A549 (cell line): ENCODE measurements at regions of chr1 and their contacts with region 1.

Region 1: DNA sequence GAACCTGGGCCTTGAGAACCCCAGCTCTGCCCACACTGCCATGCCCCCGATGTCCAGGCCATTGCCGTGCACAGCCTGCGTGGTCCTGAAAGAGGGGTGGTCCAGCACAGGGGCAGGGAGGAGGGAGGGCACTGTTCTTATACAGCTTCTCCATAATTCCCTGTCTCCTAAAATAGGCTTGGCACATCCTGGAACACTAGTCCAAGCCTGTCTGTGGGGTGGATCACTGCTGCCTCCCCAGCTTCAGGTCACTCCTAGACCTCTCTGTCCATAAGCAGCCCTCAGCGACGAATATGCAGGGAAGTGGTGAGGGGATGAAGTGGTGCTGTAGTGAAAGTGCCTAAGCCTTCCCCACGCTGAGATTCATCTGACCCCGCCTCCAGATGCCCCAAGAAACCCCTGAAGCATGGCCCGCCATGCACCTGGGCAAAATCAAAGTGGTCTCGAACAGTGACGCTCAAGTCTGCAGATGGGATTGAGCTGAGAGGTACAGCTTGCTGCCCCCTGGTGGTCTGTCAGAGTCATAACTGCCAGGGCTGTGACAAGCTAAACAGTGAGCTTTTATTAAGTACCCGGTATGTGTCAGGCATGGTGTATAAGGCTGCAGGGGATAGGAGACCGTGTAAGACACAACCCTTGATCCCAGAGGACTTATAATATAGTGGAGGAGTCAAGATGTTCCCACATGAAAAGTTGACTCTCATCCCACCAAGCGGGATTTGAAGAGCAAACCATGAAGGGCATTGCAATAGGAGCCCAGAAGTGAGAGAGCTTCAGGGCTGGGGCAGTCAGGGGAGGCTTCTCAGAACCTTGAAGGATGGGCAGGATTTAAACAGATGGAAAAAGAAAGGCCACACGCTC is 66.6 kb downstream of the FAM163A start:
- DNase-seq: peak; percentile 69 to 76
- ATAC-seq: peak; percentile 70 to 80
- H3K4me3 ChIP-seq: no peak overlapping the region
- H3K27ac ChIP-seq: no peak overlapping the region
- H3K4me1 ChIP-seq: no peaks in the 10 kb centered on the region
- CTCF ChIP-seq: peak; percentile 83
- EP300 ChIP-seq: no peak
- POLR2A ChIP-seq: no peak
- RAD21 ChIP-seq: peak; percentile 64 to 66

Region 2: GRCh38 chr1:179728271-179728670 is 81.5 kb before region 1 on chr1:
- CTCF ChIA-PET with region 1: interaction called, 120 read pairs
- POLR2A ChIA-PET with region 1: no interaction called
- DNase-seq: no peak
- ATAC-seq: no peak
- H3K4me3 ChIP-seq: no peak overlapping the region
- H3K27ac ChIP-seq: no peak overlapping the region
- H3K4me1 ChIP-seq: no peaks in the 10 kb centered on the region
- CTCF ChIP-seq: no peak
- EP300 ChIP-seq: no peak
- POLR2A ChIP-seq: no peak
- RAD21 ChIP-seq: no peak

Region 3: DNA sequence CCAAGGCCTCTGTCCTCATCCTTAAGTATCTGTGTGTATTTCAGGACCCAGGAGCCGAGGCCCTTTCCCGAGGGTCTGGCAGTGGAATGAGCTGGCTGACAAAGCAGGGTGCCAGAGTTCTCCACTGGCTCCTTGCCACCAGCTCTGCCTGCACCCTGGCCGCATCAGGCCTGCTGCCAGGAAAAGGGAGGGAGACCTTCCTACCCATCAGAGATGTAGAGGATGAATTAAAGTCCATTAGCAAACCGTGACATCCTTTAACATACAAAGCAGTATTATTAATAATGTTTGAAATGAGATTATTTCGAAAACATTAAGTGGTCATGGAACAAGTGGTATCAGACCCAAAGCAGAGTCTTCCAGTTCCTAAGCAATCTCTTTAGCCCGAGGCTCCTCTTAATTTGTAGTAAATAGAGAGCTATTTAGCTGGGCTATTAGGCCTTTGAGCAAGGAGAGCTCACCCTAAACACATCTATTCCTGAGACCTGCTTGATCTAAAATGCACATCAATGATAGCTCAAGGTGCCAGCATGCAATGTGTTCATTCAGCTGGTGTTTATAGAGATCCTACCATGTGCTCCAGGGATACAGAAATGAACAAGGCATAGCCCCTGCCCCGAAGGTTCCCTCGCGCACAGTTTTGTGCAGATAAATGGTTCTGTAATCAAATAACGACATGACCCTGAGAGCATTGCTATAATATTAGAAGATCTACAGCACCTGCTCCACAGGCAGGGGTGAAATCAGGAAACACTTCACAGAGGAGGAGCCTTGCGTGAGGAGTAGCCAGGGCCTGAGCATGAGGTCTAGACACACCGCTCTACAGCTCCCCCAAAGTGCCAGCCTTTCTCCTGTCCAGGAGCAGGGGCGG is 22.7 kb before region 1 on chr1:
- CTCF ChIA-PET with region 1: interaction called, 12 read pairs
- POLR2A ChIA-PET with region 1: no interaction called
- DNase-seq: no peak
- ATAC-seq: no peak
- H3K4me3 ChIP-seq: no peak overlapping the region
- H3K27ac ChIP-seq: no peak overlapping the region
- H3K4me1 ChIP-seq: no peaks in the 10 kb centered on the region
- CTCF ChIP-seq: no peak
- EP300 ChIP-seq: no peak
- POLR2A ChIP-seq: no peak
- RAD21 ChIP-seq: no peak

Region 4: GRCh38 chr1:179824265-179824664 is 14.5 kb after region 1 on chr1:
- CTCF ChIA-PET with region 1: interaction called, 32 read pairs
- POLR2A ChIA-PET with region 1: no interaction called
- DNase-seq: no peak
- ATAC-seq: no peak
- H3K4me3 ChIP-seq: no peak overlapping the region
- H3K27ac ChIP-seq: no peak overlapping the region
- H3K4me1 ChIP-seq: no peaks in the 10 kb centered on the region
- CTCF ChIP-seq: no peak
- EP300 ChIP-seq: no peak
- POLR2A ChIP-seq: no peak
- RAD21 ChIP-seq: no peak

Region 5: GRCh38 chr1:179840107-179840506 is 30.4 kb after region 1 on chr1:
- CTCF ChIA-PET with region 1: interaction called, 22 read pairs
- POLR2A ChIA-PET with region 1: no interaction called
- DNase-seq: no peak
- ATAC-seq: no peak
- H3K4me3 ChIP-seq: no peak overlapping the region
- H3K27ac ChIP-seq: no peak overlapping the region
- H3K4me1 ChIP-seq: no peaks in the 10 kb centered on the region
- CTCF ChIP-seq: no peak
- EP300 ChIP-seq: no peak
- POLR2A ChIP-seq: no peak
- RAD21 ChIP-seq: no peak

Region 6: DNA sequence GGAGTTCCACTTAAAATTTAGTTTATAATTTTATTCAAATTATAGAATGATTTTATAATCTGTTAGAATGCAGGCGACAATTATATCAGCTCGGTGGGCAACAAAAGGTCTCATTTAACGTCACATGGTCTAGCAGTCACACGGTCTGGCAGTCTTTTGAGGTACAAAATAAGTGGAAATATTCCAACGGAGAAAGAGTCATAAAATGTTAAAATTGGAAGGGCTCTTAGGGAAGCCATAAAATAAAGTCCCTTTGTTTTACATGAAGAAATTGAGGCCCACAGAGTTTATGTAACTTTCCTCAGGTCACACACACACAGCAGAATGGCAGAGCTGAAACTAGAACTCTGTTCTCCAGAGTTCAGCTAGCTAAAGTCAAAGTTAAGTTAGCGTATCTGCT is 260.6 kb after region 1 on chr1:
- CTCF ChIA-PET with region 1: no interaction called
- POLR2A ChIA-PET with region 1: no interaction called
- DNase-seq: no peak
- ATAC-seq: no peak
- H3K4me3 ChIP-seq: no peak overlapping the region
- H3K27ac ChIP-seq: no peak overlapping the region
- H3K4me1 ChIP-seq: no peaks in the 10 kb centered on the region
- CTCF ChIP-seq: no peak
- EP300 ChIP-seq: no peak
- POLR2A ChIP-seq: no peak
- RAD21 ChIP-seq: no peak